Caco-2 (cell line): ENCODE measurements at regions of chr2 and their contacts with region 1.

Region 1: DNA sequence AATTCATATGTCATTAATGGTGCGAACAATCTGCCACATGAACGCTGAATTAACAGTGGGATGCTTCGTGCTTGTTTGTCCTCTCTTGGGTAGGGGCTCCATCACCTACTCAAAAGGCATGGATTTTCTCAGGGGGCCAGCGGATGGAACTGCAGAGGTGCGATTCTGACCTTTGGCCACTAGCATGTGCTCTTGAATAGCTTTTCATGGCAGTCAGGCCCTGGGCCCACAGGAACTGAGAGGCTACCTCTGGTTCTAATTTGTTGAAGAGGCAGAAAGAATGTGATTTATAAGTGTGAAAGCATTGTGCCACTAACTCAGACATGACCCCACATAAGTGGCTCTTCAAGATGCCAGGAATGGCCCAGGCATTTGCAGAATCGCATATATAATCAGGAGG is 283.2 kb downstream of the INSIG2 start:
- DNase-seq: peak; percentile 43 to 48
- H3K4me3 ChIP-seq: no peak overlapping the region
- H3K4me3 Mint-ChIP-seq: no peak overlapping the region
- H3K27ac Mint-ChIP-seq: no peak overlapping the region
- H3K4me1 ChIP-seq: no peaks in the 10 kb centered on the region
- H3K4me1 Mint-ChIP-seq: no peaks in the 10 kb centered on the region
- H3K27me3 ChIP-seq: no peaks in the 10 kb centered on the region; the same call in 1 of the 2 replicates
- H3K27me3 Mint-ChIP-seq: peaks cover 12% of the 10 kb centered on the region
- CTCF ChIP-seq: peak; percentile 77 to 90

Region 2: DNA sequence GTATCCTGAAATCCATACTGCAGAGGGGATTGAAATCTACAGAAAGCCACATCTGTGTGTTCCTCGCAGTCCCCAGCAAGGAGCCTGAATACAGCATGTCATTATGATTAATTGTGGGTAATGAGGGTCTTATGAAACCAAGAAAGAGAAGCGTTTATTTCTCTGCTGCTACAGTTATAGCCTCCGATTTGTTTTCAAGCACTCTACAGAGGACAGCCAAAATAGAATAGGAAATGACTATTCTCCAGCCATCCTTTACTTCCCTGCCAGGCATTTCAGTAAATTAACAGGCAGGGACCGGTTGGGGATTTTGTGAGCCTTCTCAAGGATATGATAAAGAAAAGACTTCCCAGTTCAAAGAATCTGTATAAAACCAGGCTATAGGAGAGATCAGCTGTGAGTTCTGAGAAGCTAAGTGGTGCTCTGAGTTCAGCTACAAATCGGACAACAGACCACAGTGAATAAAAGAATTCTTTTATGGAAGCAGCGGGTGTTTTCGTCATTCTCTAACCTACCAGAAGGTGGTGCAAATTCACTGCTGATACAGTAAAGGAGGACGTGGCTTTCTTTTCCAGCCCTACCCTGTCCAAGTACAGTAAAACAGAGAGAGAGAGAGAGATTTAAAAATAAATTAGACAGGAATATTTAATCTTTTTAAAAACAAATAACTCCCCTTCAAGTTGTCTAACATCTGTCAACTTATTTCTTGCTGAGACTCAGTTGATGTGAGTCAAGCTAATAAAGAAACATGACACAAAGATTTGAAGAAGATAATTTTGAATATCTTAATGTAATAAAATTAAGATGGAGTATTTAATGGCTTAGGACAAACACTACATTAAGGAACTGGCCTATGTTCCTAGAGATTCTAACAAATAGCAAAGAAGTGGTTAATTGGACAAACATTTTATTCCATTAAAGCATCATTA is 149.6 kb before region 1 on chr2:
- CTCF ChIA-PET with region 1: interaction called, 3 read pairs
- POLR2A ChIA-PET with region 1: no interaction called
- intact Hi-C with region 1: loop called (anchors 5 kb)
- DNase-seq: peak in 1 of 2 experiments; percentile 63
- H3K4me3 ChIP-seq: no peak overlapping the region
- H3K4me3 Mint-ChIP-seq: no peak overlapping the region
- H3K27ac Mint-ChIP-seq: no peak overlapping the region
- H3K4me1 ChIP-seq: no peaks in the 10 kb centered on the region
- H3K4me1 Mint-ChIP-seq: no peaks in the 10 kb centered on the region
- H3K27me3 ChIP-seq: peaks cover 4% of the 10 kb centered on the region
- H3K27me3 Mint-ChIP-seq: peaks cover 23% of the 10 kb centered on the region
- CTCF ChIP-seq: peak; percentile 67 to 72

Region 3: GRCh38 chr2:118539290-118539689 is 167.8 kb after region 1 on chr2:
- CTCF ChIA-PET with region 1: no interaction called
- POLR2A ChIA-PET with region 1: no interaction called
- intact Hi-C with region 1: loop called (anchors 5 kb)
- DNase-seq: peak; percentile 46 to 55
- H3K4me3 ChIP-seq: no peak overlapping the region
- H3K4me3 Mint-ChIP-seq: no peak overlapping the region
- H3K27ac Mint-ChIP-seq: no peak overlapping the region
- H3K4me1 ChIP-seq: no peaks in the 10 kb centered on the region
- H3K4me1 Mint-ChIP-seq: no peaks in the 10 kb centered on the region
- H3K27me3 ChIP-seq: no peaks in the 10 kb centered on the region; the same call in 1 of the 2 replicates
- H3K27me3 Mint-ChIP-seq: peaks cover 6% of the 10 kb centered on the region
- CTCF ChIP-seq: peak; percentile 44 to 71

Region 4: GRCh38 chr2:118668431-118669424 is 297.2 kb after region 1 on chr2:
- CTCF ChIA-PET with region 1: no interaction called
- POLR2A ChIA-PET with region 1: no interaction called
- intact Hi-C with region 1: loop called (anchors 10 kb)
- DNase-seq: no peak
- H3K4me3 ChIP-seq: no peak overlapping the region
- H3K4me3 Mint-ChIP-seq: peak overlapping the region; percentile 42
- H3K27ac Mint-ChIP-seq: peak overlapping the region; percentile 43
- H3K4me1 ChIP-seq: 0 out of 2 replicates have a peak, but pooled peaks cover 4% of the 10 kb centered on the region
- H3K4me1 Mint-ChIP-seq: peaks cover 10% of the 10 kb centered on the region
- H3K27me3 ChIP-seq: peaks cover 1% of the 10 kb centered on the region; the same call in 1 of the 2 replicates
- H3K27me3 Mint-ChIP-seq: peaks cover 5% of the 10 kb centered on the region
- CTCF ChIP-seq: no peak